Left colon (tissue), 2 donors: ENCODE measurements at regions of chr20 and their contacts with region 1.

Region 1: DNA sequence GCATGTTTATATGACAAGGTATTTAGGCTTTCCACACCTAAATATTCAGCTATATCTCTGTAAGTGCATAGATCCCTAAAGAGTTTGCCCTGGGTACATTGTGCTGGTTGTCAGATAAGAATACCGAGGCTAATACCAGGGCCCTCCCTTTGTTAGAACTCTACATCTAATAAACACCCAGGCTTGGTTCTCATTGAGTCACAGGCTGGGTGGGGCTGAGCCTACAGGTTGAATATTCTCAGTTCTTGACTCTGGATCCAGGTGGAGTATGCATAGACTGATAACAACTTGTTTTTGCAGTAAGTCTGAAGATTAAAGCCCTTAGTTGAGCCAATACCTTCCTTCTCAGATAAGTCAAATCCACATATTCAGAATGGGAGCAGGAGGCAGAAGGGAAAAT is 312.2 kb upstream of the FLRT3 start:
- DNase-seq: no peak
- ATAC-seq: no peak

Region 2: GRCh38 chr20:14512811-14513210 is 136.9 kb before region 1 on chr20:
- intact Hi-C with region 1: no loop called
- DNase-seq: no peak
- ATAC-seq: no peak

Region 3: DNA sequence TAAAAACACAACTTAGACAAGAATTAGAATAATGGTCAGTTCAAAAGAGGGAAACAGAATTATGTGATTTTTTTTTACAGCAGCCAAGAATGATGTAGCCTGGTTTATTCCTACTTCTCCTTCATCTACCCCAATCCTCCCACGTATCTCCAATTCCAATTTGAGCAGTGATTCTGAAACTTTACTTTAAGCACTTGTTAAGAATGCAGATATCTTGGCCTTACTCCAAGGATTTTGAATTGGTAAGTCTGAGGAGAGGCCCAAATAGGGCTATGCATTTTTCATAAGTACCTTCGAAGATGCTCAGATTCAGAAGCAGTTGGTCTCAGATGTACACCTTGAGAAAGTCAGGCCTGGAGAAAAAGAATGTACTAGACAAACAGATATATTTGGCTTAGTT is 78.9 kb before region 1 on chr20:
- intact Hi-C with region 1: loop called in 1 of 2 experiments (anchors 5 kb)
- DNase-seq: no peak
- ATAC-seq: no peak